ENCODE measurements at regions of chr17 and their contacts with region 1.

Region 1: GRCh38 chr17:34637548-34638525 is 58.5 kb downstream of the TMEM132E start:
- DNase-seq: peak; percentile 78 to 85 (median 78)
- ATAC-seq: peak; percentile 89 to 97 (median 93)
- H3K4me3 ChIP-seq: peak overlapping the region in 2 of 3 donors; percentile 14 to 31
- H3K27ac ChIP-seq: no peak overlapping the region
- H3K4me1 ChIP-seq: peaks cover 0 to 8% (median 0%) of the 10 kb centered on the region in 4 donors
- H3K27me3 ChIP-seq: peaks cover 0 to 14% of the 10 kb centered on the region in 2 donors
- CTCF ChIP-seq: peak; percentile 73 to 90 (median 80)
- POLR2A ChIP-seq: no peak

Region 2: GRCh38 chr17:34024806-34025551 is 612.9 kb before region 1 on chr17:
- intact Hi-C with region 1: no loop called
- DNase-seq: no peak
- ATAC-seq: no peak
- H3K4me3 ChIP-seq: no peak overlapping the region
- H3K27ac ChIP-seq: no peak overlapping the region
- H3K4me1 ChIP-seq: no peaks in the 10 kb centered on the region
- H3K27me3 ChIP-seq: no peaks in the 10 kb centered on the region
- CTCF ChIP-seq: no peak
- POLR2A ChIP-seq: no peak

Region 3: GRCh38 chr17:34420254-34420766 is 217.5 kb before region 1 on chr17:
- intact Hi-C with region 1: loop called (anchors 10 kb)
- DNase-seq: peak in 2 of 3 donors; percentile 39 to 62
- ATAC-seq: peak; percentile 70 to 91 (median 81)
- H3K4me3 ChIP-seq: no peak overlapping the region
- H3K27ac ChIP-seq: no peak overlapping the region
- H3K4me1 ChIP-seq: no peaks in the 10 kb centered on the region
- H3K27me3 ChIP-seq: no peaks in the 10 kb centered on the region
- CTCF ChIP-seq: peak; percentile 86 to 96 (median 94)
- POLR2A ChIP-seq: no peak

Region 4: DNA sequence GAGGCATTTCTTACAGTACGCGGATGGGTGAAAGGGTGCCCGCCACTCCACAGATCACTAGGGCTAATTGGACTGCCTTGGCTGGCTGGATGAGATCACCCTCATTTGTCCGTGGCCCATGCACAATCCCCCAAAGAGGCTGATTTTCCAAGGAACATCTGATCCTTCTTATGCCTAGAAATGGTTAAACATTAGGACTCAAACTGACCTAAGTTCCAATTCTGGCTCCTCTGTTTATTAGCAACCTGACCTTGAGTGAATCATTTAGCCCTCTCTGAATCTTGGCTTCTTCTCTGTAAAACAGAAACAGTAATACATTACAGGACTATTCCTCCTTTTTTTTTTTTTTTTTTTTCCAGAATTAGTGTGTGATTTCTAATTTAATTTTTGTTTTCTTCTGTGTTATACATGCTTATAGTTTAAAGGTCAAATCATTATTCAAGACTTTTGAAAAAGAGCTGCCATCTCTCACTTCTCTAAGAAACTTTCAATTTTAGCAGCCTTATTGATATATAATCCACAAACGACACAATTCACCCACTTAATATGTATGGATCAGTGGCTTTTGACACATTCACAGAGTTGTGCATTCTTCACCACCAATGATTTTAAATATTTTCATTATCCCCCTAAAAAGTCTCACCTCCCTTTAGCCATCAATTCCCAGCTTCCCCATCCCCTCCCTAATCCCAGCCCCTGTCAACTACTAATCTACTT is 103.9 kb before region 1 on chr17:
- intact Hi-C with region 1: loop called in 1 of 2 experiments (anchors 10 kb)
- DNase-seq: no peak
- ATAC-seq: no peak
- H3K4me3 ChIP-seq: no peak overlapping the region
- H3K27ac ChIP-seq: no peak overlapping the region
- H3K4me1 ChIP-seq: no peaks in the 10 kb centered on the region
- H3K27me3 ChIP-seq: no peaks in the 10 kb centered on the region
- CTCF ChIP-seq: no peak
- POLR2A ChIP-seq: no peak

Region 5: DNA sequence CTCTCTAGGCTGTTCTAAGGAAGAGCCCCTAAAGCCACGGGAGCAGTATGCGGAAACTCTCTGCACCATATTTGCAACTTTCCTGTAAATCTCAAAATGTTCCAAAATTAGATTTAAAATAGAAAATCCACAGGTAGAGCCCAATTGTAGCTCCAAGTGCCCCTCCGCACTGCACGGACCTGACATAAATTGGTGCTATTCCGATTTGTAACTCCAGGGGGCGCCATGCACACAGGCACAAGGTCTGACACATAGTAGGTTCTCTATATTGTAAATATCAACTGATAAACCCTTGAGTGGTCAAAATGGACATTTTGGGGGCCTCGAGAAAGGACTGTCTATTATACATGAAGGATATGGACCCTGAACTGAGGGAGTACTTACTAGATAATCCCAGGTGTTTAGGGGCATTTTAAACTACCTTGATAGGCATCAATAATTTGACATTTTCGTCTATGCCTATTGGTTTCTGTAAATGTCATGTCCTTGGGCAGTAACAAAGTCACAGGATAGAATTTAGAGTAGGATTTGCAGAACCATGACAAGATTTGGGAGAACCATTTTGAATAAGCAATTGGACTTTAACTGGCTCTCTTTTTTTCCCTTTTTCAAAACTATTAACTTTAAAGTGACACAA is 95.0 kb before region 1 on chr17:
- intact Hi-C with region 1: loop called (anchors 5 to 10 kb)
- DNase-seq: no peak
- ATAC-seq: peak in 3 of 4 donors; percentile 47 to 58 (median 50)
- H3K4me3 ChIP-seq: no peak overlapping the region
- H3K27ac ChIP-seq: no peak overlapping the region
- H3K4me1 ChIP-seq: no peaks in the 10 kb centered on the region
- H3K27me3 ChIP-seq: no peaks in the 10 kb centered on the region
- CTCF ChIP-seq: peak; percentile 71 to 85 (median 79)
- POLR2A ChIP-seq: no peak

Region 6: DNA sequence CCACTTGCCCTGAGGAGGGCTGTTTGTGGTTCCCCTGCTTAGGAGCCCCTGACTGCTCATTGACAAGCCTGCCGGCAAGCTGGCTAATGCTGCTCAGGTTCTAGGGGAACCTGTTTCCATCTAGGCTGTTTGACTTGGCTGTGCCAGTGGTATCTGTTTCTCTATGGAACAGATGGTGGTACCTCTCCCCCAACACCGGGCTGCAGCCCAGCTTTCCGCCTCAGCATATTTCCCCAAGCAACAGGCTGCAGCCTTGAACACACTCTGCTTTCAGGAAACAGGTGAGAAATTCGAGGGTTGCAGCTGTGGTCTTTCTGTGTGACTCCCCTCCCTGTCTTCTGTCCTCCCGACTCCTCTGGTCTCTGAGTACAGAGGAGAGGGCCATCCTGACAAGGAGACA is 73.8 kb after region 1 on chr17:
- intact Hi-C with region 1: no loop called
- DNase-seq: no peak
- ATAC-seq: no peak
- H3K4me3 ChIP-seq: no peak overlapping the region
- H3K27ac ChIP-seq: no peak overlapping the region
- H3K4me1 ChIP-seq: no peaks in the 10 kb centered on the region
- H3K27me3 ChIP-seq: no peaks in the 10 kb centered on the region
- CTCF ChIP-seq: no peak
- POLR2A ChIP-seq: no peak